ENCODE measurements at regions of chr17 and their contacts with region 1.

Region 1: DNA sequence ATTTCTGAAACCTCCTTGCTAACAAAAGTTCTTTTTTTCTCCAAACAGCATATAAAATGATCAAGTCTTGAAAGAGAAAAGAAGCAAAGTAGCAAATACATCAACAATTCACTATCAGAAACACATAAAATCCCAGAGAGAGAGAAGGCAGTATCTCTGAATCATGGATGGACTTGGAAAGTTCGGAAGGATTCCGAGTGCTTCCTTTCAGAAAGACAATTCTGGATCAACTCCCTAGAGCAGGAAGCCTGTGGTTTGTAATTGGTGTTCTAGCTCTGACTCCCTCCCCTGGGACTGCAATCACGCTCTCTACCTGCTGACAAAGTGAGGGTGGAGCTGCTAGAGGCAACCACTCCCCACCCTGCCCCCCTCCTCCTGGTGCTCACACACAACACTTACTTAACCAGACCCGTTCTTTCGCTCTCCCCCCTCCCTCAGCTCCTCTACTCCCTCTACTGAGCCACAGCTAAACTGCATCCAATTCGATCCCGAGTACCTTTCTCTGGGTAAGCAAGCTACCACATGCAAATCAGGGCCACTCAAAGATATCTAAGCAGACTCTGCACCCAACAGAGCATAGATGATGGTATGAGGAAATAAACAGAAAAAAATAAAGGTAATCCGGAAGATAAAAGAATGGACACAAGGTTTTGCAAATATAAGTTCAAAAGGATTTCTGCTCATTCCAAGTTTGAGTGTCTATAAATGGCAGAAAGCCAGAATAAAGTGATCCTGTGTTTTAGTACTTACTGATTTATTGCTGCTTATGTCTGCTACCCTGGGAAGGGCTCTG is at the start of gene RNF43:
- DNase-seq: peak; percentile 24
- H3K4me3 ChIP-seq: peak within 1 kb of the TSS; percentile 49
- CTCF ChIP-seq: peak; percentile 91

Region 2: DNA sequence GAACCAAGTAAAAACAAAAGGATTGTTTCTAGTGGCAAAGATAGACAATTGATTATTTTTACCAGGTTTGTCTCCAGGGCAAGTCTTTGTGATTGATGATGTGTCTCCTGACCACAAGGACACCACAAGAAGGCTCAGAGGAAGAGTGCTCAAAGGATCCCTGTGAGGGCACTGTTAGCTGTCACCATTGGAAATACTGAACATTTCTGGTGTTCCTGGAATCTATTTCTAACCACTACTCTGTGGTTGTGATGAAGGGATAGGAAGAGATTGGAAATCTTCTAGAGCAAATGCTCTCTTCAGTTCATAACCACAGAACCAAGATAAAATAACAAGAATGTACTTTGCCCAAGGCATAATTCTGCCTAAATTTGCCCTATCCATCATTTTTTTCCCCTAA is 15.4 kb before region 1 on chr17:
- CTCF ChIA-PET with region 1: interaction called, 13 read pairs
- POLR2A ChIA-PET with region 1: no interaction called
- DNase-seq: no peak
- H3K4me3 ChIP-seq: no peak overlapping the region
- CTCF ChIP-seq: no peak

Region 3: DNA sequence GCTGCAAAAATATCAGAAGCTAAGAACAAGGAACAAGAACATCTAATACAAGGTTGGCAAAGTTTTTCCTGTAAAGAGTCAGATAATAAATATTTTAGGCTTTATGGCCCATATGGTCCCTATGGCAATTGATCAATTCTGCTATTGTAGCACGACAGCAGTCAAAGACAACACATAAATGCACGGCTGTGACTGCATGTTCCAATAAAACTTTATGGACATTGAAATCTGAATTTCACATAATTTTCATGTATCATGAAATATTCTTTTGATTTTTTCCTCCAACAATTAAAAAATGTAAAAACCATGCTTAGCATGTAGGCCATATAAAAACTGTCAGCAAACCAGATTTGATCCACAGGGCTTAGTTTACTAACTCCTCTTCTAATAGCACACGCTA is 10.3 kb after region 1 on chr17:
- CTCF ChIA-PET with region 1: interaction called, 21 read pairs
- POLR2A ChIA-PET with region 1: no interaction called
- DNase-seq: no peak
- H3K4me3 ChIP-seq: no peak overlapping the region
- CTCF ChIP-seq: no peak

Region 4: DNA sequence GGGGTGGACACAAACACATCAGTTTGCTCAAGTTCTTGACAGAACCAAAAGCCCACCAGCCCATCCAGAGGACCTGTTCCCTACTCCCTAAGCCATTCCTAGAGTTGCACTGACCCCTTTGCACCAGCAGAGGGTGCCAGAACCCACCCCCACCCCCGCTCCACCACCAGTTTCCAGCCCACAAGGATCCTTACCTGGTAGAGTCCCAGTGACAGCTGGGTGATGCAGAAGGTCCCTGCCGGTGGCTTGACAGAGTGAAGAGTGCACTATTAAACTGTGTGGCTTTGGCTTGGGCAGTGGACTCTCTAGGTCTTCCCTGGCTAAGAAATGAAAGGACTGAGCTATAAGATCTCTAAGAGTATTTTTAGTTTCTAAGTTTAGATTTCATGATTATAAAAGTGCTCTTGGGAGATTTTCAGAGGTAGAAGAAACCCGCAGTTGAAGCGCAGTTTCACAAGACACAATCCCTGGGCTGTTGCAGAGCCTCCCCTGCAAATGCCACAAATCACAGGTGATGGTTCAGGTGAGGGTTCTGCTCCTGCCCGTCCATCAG is 170.3 kb after region 1 on chr17:
- CTCF ChIA-PET with region 1: no interaction called
- POLR2A ChIA-PET with region 1: no interaction called
- DNase-seq: no peak
- H3K4me3 ChIP-seq: no peak overlapping the region
- CTCF ChIP-seq: peak; percentile 96